WTC11 (cell line): ENCODE measurements at regions of chr15 and their contacts with region 1.

Region 1: GRCh38 chr15:40290918-40291574 is 8.2 kb upstream of the ANKRD63 start:
- DNase-seq: peak; percentile 69
- ATAC-seq: peak; percentile 76
- H3K4me3 Mint-ChIP-seq: peak overlapping the region; percentile 56
- H3K27ac Mint-ChIP-seq: no peak overlapping the region
- H3K4me1 Mint-ChIP-seq: peaks cover 18% of the 10 kb centered on the region
- H3K27me3 Mint-ChIP-seq: peaks cover 42% of the 10 kb centered on the region
- CTCF ChIP-seq: no peak

Region 2: DNA sequence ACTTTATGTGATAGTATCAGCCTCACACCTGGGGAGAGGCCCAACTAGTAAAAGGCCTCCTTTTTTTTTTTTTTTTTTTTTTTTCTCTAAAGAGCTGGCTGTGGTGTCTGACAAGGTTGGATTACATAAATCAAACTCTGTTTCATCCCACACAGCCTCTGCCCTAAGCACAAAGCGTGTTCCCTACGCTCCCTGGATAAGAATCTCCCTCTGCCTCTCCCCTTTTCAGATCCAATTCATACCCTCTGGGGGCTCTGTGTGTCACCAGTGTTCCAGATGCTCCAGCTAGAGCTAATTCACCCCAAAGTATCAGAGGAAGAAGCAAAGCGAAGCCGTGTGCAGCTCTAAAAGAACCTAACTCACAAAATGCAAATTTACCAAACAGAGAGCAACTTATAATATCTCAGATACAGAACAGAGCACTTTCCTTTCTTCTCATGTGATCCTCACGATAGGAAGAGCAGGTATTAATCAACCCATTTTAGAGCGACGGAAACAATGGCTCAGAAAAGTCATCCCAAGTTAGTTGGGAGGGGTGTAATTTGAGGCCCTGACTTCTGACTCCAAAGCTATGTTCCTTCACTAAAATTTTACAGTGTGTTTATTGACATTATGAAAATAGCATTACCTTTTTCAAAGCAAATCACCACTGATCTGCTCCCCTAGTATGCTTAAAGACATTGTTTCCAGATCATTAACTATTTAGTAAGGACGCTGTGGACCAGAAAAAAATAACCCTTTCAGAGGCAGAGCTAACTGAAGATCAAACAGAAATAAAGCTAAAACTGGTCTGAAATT is 194.8 kb before region 1 on chr15:
- CTCF ChIA-PET with region 1: no interaction called
- POLR2A ChIA-PET with region 1: no interaction called
- DNase-seq: no peak
- ATAC-seq: no peak
- H3K4me3 Mint-ChIP-seq: no peak overlapping the region
- H3K27ac Mint-ChIP-seq: no peak overlapping the region
- H3K4me1 Mint-ChIP-seq: peaks cover 83% of the 10 kb centered on the region
- H3K27me3 Mint-ChIP-seq: no peaks in the 10 kb centered on the region
- CTCF ChIP-seq: no peak

Region 3: DNA sequence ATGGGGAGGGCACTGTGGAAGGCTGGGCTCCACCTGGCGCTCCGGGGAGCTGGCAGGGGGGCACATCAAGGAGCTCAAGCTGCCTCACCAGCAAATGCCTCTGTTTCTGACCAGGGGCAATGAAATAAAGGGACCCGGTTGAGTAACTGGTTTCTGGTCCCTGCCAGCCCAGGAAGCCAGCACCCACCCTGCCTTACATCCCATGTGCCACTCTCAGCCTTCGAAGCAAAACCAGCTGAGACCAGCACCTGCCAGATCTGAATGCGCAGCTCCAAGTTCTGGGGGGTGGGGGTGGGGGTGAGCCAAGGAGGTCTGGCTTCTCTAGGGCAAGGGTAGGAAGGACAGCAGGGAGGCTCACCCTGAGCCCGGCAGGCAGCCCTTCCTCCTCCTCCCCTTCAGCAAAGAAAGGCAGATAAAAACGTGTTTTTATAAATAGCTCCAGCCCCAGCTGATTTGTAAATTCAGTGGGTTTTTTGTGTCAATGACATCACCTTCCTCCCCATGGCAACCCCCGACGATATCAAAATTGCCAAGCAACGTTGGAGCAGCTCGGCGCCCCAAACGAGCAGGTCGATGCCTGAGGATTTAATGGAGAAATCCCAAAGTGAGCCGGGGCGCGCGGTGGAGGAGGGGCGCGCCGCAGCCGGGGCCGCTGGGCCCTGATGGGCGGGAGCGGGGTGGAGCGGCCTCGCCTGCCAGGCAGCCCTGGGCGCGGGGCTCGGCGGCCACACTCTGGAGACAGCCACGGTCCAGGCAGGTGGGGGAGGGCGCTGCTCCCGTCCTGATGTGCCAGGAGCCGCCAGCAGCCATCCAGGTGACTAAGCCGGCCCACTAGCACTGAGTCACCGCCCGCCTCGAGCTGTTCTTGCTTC is 52.3 kb before region 1 on chr15 and contains the start of gene PAK6:
- CTCF ChIA-PET with region 1: no interaction called
- POLR2A ChIA-PET with region 1: no interaction called
- DNase-seq: peak; percentile 82
- ATAC-seq: peak; percentile 92
- H3K4me3 Mint-ChIP-seq: peak within 1 kb of the TSS; percentile 60
- H3K27ac Mint-ChIP-seq: no peak within 1 kb of the TSS
- H3K4me1 Mint-ChIP-seq: peaks cover 12% of the 10 kb centered on the region
- H3K27me3 Mint-ChIP-seq: no peaks in the 10 kb centered on the region
- CTCF ChIP-seq: no peak
- total RNA-seq, gene PAK6: 8.7 to 11.7 TPM (median 9.6 TPM) in 3 replicates

Region 4: DNA sequence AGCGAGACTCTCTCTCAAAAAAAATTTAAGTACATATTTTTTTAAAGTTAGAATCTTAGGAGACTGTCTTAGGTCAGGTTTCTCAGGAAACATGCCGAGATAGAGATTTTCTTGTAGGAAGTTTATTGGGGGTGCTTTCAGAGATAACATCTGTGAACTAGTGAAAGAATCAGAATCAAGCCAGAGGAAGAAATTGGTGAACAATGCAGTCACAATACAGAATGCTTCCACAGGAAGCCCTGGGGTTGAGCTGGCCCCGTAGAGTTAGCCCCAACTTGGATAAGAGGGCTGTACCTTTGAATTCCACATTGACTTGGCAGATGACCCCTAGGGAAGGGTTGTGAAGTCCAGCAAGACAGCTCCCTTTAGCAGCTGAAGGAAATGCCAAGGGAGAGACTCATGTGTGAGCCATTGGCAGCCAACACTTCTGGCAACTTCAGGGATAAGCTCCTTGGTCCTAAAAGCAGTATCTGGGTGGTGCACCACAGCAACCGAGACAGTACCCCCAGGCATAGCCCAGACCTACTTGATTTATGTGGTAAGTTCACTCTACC is 23.8 kb after region 1 on chr15:
- CTCF ChIA-PET with region 1: interaction called, 341 read pairs
- POLR2A ChIA-PET with region 1: no interaction called
- DNase-seq: no peak
- ATAC-seq: no peak
- H3K4me3 Mint-ChIP-seq: no peak overlapping the region
- H3K27ac Mint-ChIP-seq: no peak overlapping the region
- H3K4me1 Mint-ChIP-seq: peaks cover 3% of the 10 kb centered on the region
- H3K27me3 Mint-ChIP-seq: peaks cover 19% of the 10 kb centered on the region
- CTCF ChIP-seq: no peak

Region 5: DNA sequence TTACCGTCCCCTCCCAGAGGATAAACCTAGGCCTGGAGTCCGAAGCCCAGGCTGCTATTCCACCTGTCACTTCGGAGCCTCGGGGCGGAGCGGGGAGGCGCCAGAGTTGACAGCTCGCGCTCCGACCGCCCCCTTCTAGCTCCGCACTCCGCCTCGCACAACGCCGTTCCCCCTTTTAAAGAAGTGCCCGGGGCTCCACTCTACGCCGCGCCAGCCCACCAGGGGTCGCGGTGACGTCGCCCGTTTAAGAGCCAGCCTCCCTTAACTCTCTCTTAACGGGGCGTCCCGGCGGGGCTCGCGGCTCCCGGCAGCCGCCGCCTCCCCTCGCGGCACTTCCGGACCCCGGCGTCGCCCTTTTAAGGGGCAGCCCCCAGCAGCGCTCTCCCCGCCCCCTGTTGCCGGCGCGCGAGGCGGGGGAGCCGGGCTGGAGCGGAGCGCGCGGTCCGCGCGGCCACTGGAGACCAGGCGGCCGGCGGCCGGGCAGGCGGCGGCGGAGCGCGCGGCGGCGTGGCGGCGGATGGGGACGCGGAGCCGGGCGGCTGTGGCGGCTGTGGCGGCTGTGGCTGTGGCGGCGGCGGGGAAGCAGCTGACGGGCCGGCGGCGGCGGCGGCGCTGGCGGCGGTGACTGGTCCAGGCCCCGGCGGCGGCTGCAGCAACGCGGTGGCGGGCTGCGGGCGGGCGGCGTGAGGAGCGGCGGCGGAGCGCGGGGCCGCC is 32.4 kb after region 1 on chr15 and contains the start of gene INAFM2:
- CTCF ChIA-PET with region 1: interaction called, 27 read pairs
- POLR2A ChIA-PET with region 1: interaction called, 3 read pairs
- DNase-seq: peak; percentile 96
- ATAC-seq: peak; percentile 82
- H3K4me3 Mint-ChIP-seq: peak within 1 kb of the TSS; percentile 68
- H3K27ac Mint-ChIP-seq: no peak within 1 kb of the TSS
- H3K4me1 Mint-ChIP-seq: peaks cover 62% of the 10 kb centered on the region
- H3K27me3 Mint-ChIP-seq: peaks cover 25% of the 10 kb centered on the region
- CTCF ChIP-seq: no peak
- total RNA-seq, gene INAFM2: 28.2 to 34.2 TPM (median 30.3 TPM) in 3 replicates

Region 6: GRCh38 chr15:40361640-40362039 is 70.6 kb after region 1 on chr15:
- CTCF ChIA-PET with region 1: no interaction called
- POLR2A ChIA-PET with region 1: no interaction called
- DNase-seq: no peak
- ATAC-seq: no peak
- H3K4me3 Mint-ChIP-seq: no peak overlapping the region
- H3K27ac Mint-ChIP-seq: no peak overlapping the region
- H3K4me1 Mint-ChIP-seq: peaks cover 8% of the 10 kb centered on the region
- H3K27me3 Mint-ChIP-seq: peaks cover 30% of the 10 kb centered on the region
- CTCF ChIP-seq: no peak